CD8-positive, alpha-beta T cell (primary cell): ENCODE measurements at regions of chr2 and their contacts with region 1.

Region 1: DNA sequence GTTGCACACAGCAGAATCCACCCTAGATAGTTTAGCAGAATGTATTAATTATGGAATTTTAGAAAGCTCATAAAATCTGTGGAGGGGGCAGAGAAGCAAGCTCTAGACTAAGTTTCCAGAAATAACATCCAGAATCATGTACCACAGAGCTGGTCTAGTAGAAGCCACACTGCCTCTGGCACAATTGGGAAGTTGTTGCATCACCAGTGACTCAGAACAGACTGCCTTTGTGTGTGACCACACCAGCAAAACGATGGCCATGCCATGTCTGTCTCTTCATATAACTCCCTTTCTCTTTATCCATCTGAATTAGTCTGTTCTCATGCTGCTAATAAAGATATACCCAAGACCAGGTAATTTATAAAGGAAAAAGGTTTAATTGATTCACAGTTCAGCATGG is 158.9 kb downstream of the CCDC148 start:
- DNase-seq: no peak
- ATAC-seq: no peak
- H3K4me3 ChIP-seq: no peak overlapping the region
- H3K4me3 Mint-ChIP-seq: no peak overlapping the region
- H3K27ac ChIP-seq: no peak overlapping the region
- H3K27ac Mint-ChIP-seq: no peak overlapping the region
- H3K4me1 ChIP-seq: no peaks in the 10 kb centered on the region
- H3K4me1 Mint-ChIP-seq: no peaks in the 10 kb centered on the region
- H3K27me3 ChIP-seq: no peaks in the 10 kb centered on the region
- H3K27me3 Mint-ChIP-seq: no peaks in the 10 kb centered on the region
- CTCF ChIP-seq: no peak

Region 2: GRCh38 chr2:158366342-158366741 is 68.7 kb after region 1 on chr2:
- CTCF ChIA-PET with region 1: no interaction called
- POLR2A ChIA-PET with region 1: no interaction called
- intact Hi-C with region 1: no loop called
- DNase-seq: no peak
- ATAC-seq: no peak
- H3K4me3 ChIP-seq: no peak overlapping the region
- H3K4me3 Mint-ChIP-seq: no peak overlapping the region
- H3K27ac ChIP-seq: no peak overlapping the region
- H3K27ac Mint-ChIP-seq: no peak overlapping the region
- H3K4me1 ChIP-seq: no peaks in the 10 kb centered on the region
- H3K4me1 Mint-ChIP-seq: no peaks in the 10 kb centered on the region
- H3K27me3 ChIP-seq: no peaks in the 10 kb centered on the region
- H3K27me3 Mint-ChIP-seq: no peaks in the 10 kb centered on the region
- CTCF ChIP-seq: no peak

Region 3: DNA sequence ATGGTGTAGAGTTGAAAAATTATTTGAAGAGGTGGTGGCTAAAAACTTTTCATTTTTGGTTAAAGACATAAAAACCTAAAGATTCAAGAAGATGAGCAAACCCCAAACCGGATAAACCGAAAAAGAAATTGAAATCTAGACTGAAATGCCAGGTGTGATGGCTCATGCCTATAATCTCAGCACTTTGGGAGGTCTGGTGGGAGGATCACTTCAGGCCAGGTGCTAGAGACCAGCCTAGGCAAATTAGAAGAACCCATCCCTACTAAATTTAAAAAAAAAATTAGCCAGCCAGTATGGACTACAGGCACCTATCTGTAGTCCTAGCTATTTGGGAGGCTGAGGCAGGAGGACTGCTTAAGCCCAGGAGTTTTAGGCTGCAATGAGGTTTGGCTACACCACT is 1191.9 kb after region 1 on chr2:
- CTCF ChIA-PET with region 1: no interaction called
- POLR2A ChIA-PET with region 1: no interaction called
- intact Hi-C with region 1: loop called in 1 of 2 experiments (anchors 5 kb)
- DNase-seq: no peak
- ATAC-seq: no peak
- H3K4me3 ChIP-seq: no peak overlapping the region
- H3K4me3 Mint-ChIP-seq: no peak overlapping the region
- H3K27ac ChIP-seq: no peak overlapping the region
- H3K27ac Mint-ChIP-seq: no peak overlapping the region
- H3K4me1 ChIP-seq: no peaks in the 10 kb centered on the region
- H3K4me1 Mint-ChIP-seq: peaks cover 14% of the 10 kb centered on the region
- H3K27me3 ChIP-seq: no peaks in the 10 kb centered on the region
- H3K27me3 Mint-ChIP-seq: no peaks in the 10 kb centered on the region
- CTCF ChIP-seq: no peak